AG04450 (cell line): ENCODE measurements at regions of chr6 and their contacts with region 1.

Region 1: DNA sequence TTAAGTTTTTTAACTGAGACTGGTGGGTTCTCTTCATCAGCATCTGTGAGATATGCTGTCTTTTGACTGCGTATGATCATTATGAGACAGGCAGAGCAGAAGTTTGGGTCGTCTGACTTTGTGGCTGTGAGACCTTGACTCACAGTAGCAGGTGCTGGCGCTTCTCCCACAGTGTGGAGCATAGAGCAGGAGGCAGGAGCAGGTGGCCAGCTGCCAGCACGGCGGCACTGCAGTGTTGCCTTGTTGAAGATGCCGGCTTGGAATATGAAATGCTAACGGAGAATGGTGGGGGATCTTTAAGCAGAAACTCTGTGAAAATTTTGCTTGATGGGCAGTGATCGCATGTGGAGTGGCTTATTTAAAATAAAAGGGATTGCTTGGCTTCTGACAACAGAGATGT is 105.0 kb downstream of the TIAM2 start:
- DNase-seq: no peak
- H3K4me3 ChIP-seq: no peak overlapping the region
- H3K27ac ChIP-seq: no peak overlapping the region
- H3K27me3 ChIP-seq: no peaks in the 10 kb centered on the region
- CTCF ChIP-seq: no peak

Region 2: DNA sequence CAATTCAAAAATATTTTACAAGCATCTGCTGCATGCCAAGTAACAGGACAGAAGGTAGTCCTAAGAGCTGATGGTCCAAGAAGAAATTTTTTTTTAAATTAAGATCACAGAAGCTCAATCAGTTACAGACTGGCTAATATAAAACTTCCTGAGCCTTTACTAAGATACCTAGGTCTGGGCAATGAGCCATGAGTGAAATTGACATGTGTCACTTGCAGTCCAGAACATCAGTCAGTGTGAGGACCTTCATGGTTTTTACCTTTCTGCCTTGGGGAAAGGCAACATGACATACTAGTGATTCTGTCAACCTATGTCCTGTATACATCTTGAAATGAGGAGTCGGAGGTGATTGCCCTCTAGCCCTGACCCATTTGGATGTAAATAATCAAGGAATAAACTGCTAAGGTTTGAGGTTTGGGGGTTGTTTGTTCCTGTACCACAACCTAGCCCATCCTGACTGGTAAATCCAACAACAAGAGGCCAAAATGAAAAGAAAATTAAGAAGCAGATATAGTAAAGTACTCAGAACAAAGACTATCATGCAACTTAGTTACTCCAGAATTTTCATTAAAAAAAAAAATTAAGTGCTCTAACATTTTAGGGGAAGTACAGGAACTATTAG is 659.6 kb before region 1 on chr6:
- CTCF ChIA-PET with region 1: no interaction called
- POLR2A ChIA-PET with region 1: interaction called, 15 read pairs
- DNase-seq: no peak
- H3K4me3 ChIP-seq: no peak overlapping the region
- H3K27ac ChIP-seq: no peak overlapping the region
- H3K27me3 ChIP-seq: no peaks in the 10 kb centered on the region
- CTCF ChIP-seq: no peak